Thyroid gland (tissue), 4 donors: ENCODE measurements at regions of chr12 and their contacts with region 1.

Region 1: GRCh38 chr12:113358381-113359132 is at the start of gene PLBD2:
- DNase-seq: peak; percentile 95
- H3K4me3 ChIP-seq: peak within 1 kb of the TSS; percentile 22 to 80 (median 57)
- H3K27ac ChIP-seq: peak within 1 kb of the TSS; percentile 76 to 90 (median 80)
- H3K4me1 ChIP-seq: peaks cover 0 to 4% of the 10 kb centered on the region in 2 donors
- H3K27me3 ChIP-seq: no peaks in the 10 kb centered on the region
- CTCF ChIP-seq: peak in 1 of 6 experiments; percentile 12
- POLR2A ChIP-seq: peak; percentile 37 to 71
- total RNA-seq, gene PLBD2: 21.0 to 51.5 (median 44.3) TPM

Region 2: DNA sequence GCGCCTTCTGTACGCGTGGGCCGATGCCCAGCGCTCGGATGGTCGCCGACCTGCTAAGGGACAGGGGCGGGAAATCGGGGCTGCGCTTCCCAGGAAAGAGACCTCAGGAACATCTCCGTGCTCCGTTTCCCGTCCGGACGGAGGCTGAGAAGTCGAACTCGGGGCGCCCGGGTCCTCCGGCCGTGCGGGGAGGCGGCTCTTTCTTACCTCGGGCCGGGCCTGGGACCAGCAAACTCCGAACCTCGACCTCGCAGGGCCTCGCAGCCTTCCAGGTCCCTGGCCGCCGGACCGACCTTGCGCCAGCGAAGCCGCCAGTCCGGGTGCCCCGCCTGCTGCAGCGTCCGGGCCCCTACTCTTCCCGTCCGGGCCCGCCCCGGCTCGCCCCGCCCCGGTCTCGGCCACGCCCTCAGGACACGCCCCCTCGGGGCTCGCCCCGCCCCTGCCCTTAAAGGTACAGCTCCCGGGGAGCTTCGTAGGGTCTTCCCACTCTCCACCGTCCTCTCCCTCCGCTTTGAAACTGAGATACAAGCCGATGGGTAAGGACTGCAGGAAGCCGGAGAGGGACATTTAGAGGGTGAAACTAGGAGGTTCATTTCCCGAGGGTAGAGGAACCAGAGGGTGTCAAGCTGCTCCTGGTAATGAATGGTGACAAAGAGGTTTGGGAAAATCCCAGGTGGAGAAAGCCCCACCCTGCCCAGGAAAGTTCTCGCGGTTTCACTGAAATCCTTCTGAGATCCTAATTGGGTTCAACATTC is 23.6 kb before region 1 on chr12 and contains the start of gene SLC8B1:
- intact Hi-C with region 1: loop called (anchors 2 kb)
- DNase-seq: peak; percentile 83 to 86
- H3K4me3 ChIP-seq: peak within 1 kb of the TSS; percentile 38 to 65 (median 44)
- H3K27ac ChIP-seq: peak within 1 kb of the TSS in 2 of 3 donors; percentile 45 to 63
- H3K4me1 ChIP-seq: peaks cover 4 to 24% of the 10 kb centered on the region in 2 donors
- H3K27me3 ChIP-seq: no peaks in the 10 kb centered on the region
- CTCF ChIP-seq: no peak
- POLR2A ChIP-seq: peak; percentile 15 to 83
- total RNA-seq, gene SLC8B1: 23.3 to 50.5 (median 30.7) TPM

Region 3: DNA sequence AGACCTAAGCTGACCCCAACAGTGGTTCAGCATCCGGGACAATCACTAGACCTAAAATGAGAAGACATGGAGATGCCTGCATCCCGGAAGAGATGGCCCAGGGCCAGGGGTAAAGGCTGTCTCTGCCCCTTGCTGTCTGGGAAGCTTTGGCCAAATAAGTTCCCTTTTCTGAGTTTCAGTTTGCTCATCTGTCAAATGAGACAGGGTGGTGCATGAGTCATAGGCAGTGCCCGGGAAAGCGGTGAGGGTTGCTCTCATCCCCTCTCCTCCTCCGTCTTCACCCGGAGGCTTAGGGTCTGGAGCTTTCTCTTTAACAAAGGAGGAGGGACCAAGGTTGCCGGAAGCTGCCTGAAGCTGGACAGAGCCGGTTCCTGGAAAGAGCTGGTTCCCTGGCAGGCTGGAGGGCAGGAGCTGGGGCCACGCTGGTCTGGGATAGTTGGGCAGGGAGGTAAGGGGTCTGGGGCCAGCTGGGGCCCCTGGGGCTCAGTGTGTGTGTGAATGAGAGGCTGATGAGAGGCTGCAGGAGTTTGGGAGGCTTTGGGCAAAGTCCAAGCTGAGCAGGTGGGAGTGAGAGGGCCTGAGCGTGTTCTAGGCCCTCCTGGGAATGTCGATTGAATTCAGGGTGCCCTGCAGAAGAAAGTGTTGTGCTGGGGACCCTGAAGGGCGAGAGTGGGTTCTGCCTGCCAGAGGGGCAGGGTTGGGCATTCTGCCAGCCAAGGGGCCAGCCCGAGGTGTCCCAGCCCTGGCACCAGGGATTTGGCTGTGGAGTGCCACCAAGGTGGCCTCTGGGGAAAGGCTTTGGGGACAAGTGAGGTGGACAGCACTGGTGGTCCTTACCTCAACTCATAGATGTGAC is 63.7 kb after region 1 on chr12 and contains the start of gene SDSL:
- intact Hi-C with region 1: loop called (anchors 10 kb)
- DNase-seq: peak; percentile 80 to 84
- H3K4me3 ChIP-seq: peak within 1 kb of the TSS; percentile 34 to 52 (median 41)
- H3K27ac ChIP-seq: peak within 1 kb of the TSS; percentile 63 to 92 (median 77)
- H3K4me1 ChIP-seq: peaks cover 17 to 30% of the 10 kb centered on the region in 2 donors
- H3K27me3 ChIP-seq: no peaks in the 10 kb centered on the region
- CTCF ChIP-seq: no peak
- POLR2A ChIP-seq: peak in 1 of 2 donors; percentile 73
- total RNA-seq, gene SDSL: 13.6 to 42.2 (median 27.5) TPM